ENCODE measurements at regions of chr18 and their contacts with region 1.

Region 1: GRCh38 chr18:63025251-63026090 is 294.1 kb downstream of the BCL2 start:
- DNase-seq: peak in 1 of 4 experiments; percentile 13
- ATAC-seq: peak; percentile 80
- H3K4me3 ChIP-seq: no peak overlapping the region
- H3K27ac ChIP-seq: no peak overlapping the region
- H3K4me1 ChIP-seq: peaks cover 0 to 3% of the 10 kb centered on the region in 2 experiments; a peak in 1 of 5 replicates
- H3K27me3 ChIP-seq: peaks cover 0 to 28% of the 10 kb centered on the region in 2 experiments; a peak in 3 of 5 replicates
- CTCF ChIP-seq: peak; percentile 25 to 36 (median 35); a peak in 3 of 6 replicates
- EP300 ChIP-seq: no peak
- POLR2A ChIP-seq: no peak
- RAD21 ChIP-seq: peak in 1 of 2 experiments; percentile 44; a peak in 1 of 4 replicates

Region 2: GRCh38 chr18:63040788-63041410 is 15.4 kb after region 1 on chr18:
- CTCF ChIA-PET with region 1: no interaction called
- POLR2A ChIA-PET with region 1: no interaction called
- in situ Hi-C with region 1: no loop called
- intact Hi-C with region 1: no loop called
- DNase-seq: no peak
- ATAC-seq: no peak
- H3K4me3 ChIP-seq: no peak overlapping the region
- H3K27ac ChIP-seq: no peak overlapping the region
- H3K4me1 ChIP-seq: no peaks in the 10 kb centered on the region
- H3K27me3 ChIP-seq: peaks cover 0 to 5% of the 10 kb centered on the region in 2 experiments; a peak in 2 of 5 replicates
- CTCF ChIP-seq: no peak
- EP300 ChIP-seq: no peak
- POLR2A ChIP-seq: no peak
- RAD21 ChIP-seq: no peak

Region 3: GRCh38 chr18:63119647-63120046 is 94.2 kb after region 1 on chr18:
- CTCF ChIA-PET with region 1: no interaction called
- POLR2A ChIA-PET with region 1: no interaction called
- in situ Hi-C with region 1: no loop called
- intact Hi-C with region 1: loop called (anchors 10 kb)
- DNase-seq: peak in 2 of 4 experiments; percentile 4 to 10
- ATAC-seq: no peak
- H3K4me3 ChIP-seq: no peak overlapping the region
- H3K27ac ChIP-seq: no peak overlapping the region
- H3K4me1 ChIP-seq: no peaks in the 10 kb centered on the region
- H3K27me3 ChIP-seq: peaks cover 0 to 4% of the 10 kb centered on the region in 2 experiments; a peak in 1 of 5 replicates
- CTCF ChIP-seq: peak in 2 of 3 experiments; percentile 19 to 34; a peak in 2 of 6 replicates
- EP300 ChIP-seq: no peak
- POLR2A ChIP-seq: no peak
- RAD21 ChIP-seq: peak in 1 of 2 experiments; percentile 30; a peak in 2 of 4 replicates

Region 4: GRCh38 chr18:63155169-63155852 is 129.8 kb after region 1 on chr18:
- CTCF ChIA-PET with region 1: no interaction called
- POLR2A ChIA-PET with region 1: no interaction called
- in situ Hi-C with region 1: no loop called
- intact Hi-C with region 1: loop called (anchors 10 kb)
- DNase-seq: peak; percentile 47 to 63 (median 54)
- ATAC-seq: peak; percentile 99
- H3K4me3 ChIP-seq: peak overlapping the region; percentile 11; the same call in 1 of the 2 replicates
- H3K27ac ChIP-seq: no peak overlapping the region
- H3K4me1 ChIP-seq: no peaks in the 10 kb centered on the region; a peak in 1 of 5 replicates
- H3K27me3 ChIP-seq: peaks cover 12 to 32% of the 10 kb centered on the region in 2 experiments; a peak in 3 of 5 replicates
- CTCF ChIP-seq: peak; percentile 65 to 76 (median 71)
- EP300 ChIP-seq: no peak
- POLR2A ChIP-seq: no peak
- RAD21 ChIP-seq: peak; percentile 35 to 46

Region 5: DNA sequence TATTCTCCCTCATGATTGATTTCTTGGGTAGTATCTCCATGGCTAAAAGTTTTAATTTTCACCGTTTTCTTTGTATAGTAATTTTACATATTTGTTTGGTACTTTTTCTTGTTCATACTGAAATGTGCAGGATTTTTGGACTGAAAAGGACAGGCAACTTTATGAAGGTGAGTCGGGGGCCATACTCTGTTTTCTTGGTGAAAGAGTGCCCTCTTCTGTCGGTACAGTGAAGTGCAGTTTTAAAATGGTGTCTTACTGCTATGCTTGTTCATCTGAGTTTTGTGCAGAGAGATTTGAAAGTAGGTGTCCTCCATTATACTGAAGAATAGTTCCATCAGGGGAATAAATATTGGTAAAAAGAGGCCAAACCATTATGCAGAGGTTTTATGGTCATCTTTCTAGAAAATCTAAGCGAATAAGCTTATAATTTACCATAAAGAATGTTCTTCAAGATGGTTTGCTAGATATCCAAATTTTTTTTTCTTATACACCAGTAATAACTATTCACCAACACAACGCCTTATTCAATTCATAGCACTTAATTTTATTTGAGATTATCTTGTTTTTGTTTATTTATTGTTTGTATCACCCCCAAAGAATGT is 553.0 kb after region 1 on chr18:
- CTCF ChIA-PET with region 1: interaction called, 3 read pairs
- POLR2A ChIA-PET with region 1: no interaction called
- in situ Hi-C with region 1: no loop called
- intact Hi-C with region 1: loop called (anchors 10 kb)
- DNase-seq: peak; percentile 12 to 35 (median 16)
- ATAC-seq: peak; percentile 72
- H3K4me3 ChIP-seq: no peak overlapping the region
- H3K27ac ChIP-seq: no peak overlapping the region
- H3K4me1 ChIP-seq: no peaks in the 10 kb centered on the region
- H3K27me3 ChIP-seq: no peaks in the 10 kb centered on the region
- CTCF ChIP-seq: peak; percentile 34 to 63 (median 63)
- EP300 ChIP-seq: no peak
- POLR2A ChIP-seq: no peak
- RAD21 ChIP-seq: peak; percentile 38 to 61; a peak in 3 of 4 replicates

Measured in K562 (cell line).